Body of pancreas (tissue), 4 donors: ENCODE measurements at regions of chrX and their contacts with region 1.

Region 1: GRCh38 chrX:9341291-9342201 is 123.3 kb upstream of the TBL1X start:
- DNase-seq: peak; percentile 37 to 63 (median 54)
- ATAC-seq: peak; percentile 38
- H3K4me3 ChIP-seq: no peak overlapping the region
- H3K27ac ChIP-seq: peak overlapping the region in 3 of 4 donors; percentile 47 to 83 (median 59)
- H3K4me1 ChIP-seq: peaks cover 16% of the 10 kb centered on the region
- H3K27me3 ChIP-seq: no peaks in the 10 kb centered on the region
- CTCF ChIP-seq: no peak
- POLR2A ChIP-seq: no peak

Region 2: DNA sequence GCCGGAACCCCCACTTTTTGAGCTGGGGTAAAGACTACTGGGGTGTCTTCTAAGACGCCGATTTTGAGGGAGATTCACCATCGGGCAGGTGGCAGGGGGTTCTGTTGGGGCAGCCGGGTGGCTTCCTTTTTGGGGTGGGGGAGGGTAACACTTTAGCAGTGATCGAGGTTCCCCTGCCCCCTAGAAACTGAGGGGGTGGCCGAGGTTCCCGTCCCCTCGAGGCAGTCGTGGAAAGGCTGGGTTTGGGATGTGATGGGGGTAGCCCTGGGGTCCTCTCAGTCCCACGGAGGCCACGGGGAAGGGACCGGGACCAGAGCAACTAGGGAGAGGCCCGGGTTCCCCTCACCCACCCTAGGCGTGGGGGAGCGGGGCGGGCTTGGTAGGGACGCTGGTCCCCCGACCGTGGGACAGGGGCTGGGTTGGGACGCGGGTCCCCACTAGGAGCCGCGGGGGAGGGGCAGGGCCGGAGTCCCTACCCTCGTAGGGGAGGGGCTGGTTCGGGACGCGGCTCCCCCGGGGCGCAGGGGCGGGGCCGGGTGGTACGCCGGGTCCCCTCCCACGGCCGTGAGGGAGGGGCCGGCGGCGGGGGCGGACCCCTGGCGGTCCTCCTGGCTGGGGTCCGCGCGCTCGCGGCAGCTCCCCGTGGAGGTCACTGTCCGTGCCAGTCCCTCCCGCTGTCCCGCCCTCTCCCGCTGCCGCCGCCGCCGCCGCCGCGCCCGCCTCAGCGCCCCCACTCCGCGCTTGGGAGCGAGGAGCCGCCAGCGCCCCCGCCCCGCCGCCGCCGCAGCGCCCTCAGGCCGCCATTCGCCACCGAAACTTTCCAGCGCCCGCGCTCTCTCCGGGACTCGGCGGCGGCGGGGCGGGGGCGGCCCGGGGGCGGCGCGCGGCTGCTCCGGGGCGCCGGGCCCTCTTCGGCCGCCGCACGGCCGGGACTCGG is 123.2 kb after region 1 on chrX and contains the start of gene TBL1X:
- intact Hi-C with region 1: loop called (anchors 5 kb)
- DNase-seq: peak in 3 of 4 donors; percentile 31 to 57 (median 36)
- ATAC-seq: peak; percentile 23
- H3K4me3 ChIP-seq: peak within 1 kb of the TSS; percentile 37 to 41
- H3K27ac ChIP-seq: peak within 1 kb of the TSS; percentile 62 to 77 (median 68)
- H3K4me1 ChIP-seq: peaks cover 40% of the 10 kb centered on the region
- H3K27me3 ChIP-seq: no peaks in the 10 kb centered on the region
- CTCF ChIP-seq: no peak
- POLR2A ChIP-seq: no peak
- total RNA-seq, gene TBL1X: 7.9 to 16.3 TPM